ENCODE measurements at regions of chr2 and their contacts with region 1.

Region 1: DNA sequence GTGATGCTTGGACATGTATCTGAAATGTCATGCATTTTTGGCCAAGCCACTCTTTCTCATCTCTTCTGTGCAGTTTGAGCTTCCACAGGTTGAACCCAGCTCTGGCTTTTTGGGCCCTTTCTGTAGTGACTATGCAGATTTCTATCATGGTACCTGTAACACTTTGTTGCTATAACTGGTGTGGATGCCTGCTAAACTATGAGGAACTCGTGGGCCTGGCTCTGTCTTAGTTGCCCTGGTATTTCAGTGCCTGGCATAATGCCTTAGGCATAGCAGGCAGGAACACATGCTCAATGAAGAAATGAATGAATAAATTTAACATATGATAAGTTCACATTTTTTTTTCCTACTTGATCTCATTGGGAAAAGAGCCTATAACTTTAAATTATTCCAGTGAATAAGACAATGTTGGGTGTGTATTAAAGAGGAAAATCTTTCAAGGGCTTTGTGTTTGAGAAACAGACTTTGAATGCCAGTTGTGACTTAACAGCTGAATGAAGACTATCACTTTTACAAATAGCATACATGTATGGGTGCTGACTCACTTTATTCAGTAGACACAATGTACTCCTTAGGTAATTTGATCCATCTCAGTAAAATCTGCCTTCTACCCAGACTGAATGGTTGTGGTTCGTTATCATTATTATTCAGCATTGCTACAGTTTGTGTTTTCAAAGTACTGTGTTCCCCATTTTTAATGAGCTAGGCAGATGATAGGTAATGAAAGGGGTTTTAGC is 86.4 kb upstream of the MAP4K3 start:
- DNase-seq: no peak
- ATAC-seq: no peak
- H3K4me3 Mint-ChIP-seq: no peak overlapping the region
- H3K27ac Mint-ChIP-seq: no peak overlapping the region
- H3K4me1 Mint-ChIP-seq: peaks cover 40% of the 10 kb centered on the region
- H3K27me3 Mint-ChIP-seq: no peaks in the 10 kb centered on the region
- CTCF ChIP-seq: no peak

Region 2: DNA sequence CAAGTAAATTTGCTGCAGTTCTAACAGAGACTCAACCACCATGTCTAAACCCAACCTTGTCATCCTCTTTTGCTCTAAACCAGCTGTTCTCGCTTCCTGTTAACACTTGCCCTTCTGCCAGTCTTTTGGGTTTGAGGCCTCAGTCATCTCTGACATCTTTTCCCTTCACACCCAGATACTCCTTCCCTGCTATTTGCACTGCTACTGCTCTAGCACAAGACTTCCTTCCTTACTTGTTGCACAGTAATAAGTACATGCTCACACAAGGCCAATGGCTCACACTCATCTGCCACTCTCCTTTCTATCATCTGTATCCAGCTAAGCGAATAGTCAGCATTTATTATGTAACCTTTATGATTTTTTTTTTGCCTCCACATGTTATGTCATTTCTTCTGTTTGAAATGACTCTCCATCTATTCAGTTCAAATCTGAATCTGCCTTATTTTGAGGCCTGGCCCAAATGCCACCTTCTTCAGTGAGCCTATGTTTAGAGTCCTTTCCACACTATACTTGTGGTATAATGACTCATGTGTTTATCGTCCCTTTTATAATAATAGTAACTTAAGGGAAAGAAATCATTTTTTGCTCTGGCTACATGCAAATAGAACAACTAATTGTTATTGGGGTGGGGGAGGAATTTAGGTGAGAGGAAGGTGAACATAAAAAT is 257.2 kb before region 1 on chr2:
- CTCF ChIA-PET with region 1: no interaction called
- POLR2A ChIA-PET with region 1: no interaction called
- intact Hi-C with region 1: loop called (anchors 10 kb)
- DNase-seq: no peak
- ATAC-seq: peak; percentile 69
- H3K4me3 Mint-ChIP-seq: peak overlapping the region; percentile 2
- H3K27ac Mint-ChIP-seq: peak overlapping the region; percentile 85
- H3K4me1 Mint-ChIP-seq: peaks cover 29% of the 10 kb centered on the region
- H3K27me3 Mint-ChIP-seq: no peaks in the 10 kb centered on the region
- CTCF ChIP-seq: no peak

Region 3: GRCh38 chr2:39379643-39380524 is 143.6 kb before region 1 on chr2:
- CTCF ChIA-PET with region 1: interaction called, 3 read pairs
- POLR2A ChIA-PET with region 1: no interaction called
- intact Hi-C with region 1: loop called (anchors 2 kb)
- DNase-seq: no peak
- ATAC-seq: peak; percentile 35
- H3K4me3 Mint-ChIP-seq: no peak overlapping the region
- H3K27ac Mint-ChIP-seq: no peak overlapping the region
- H3K4me1 Mint-ChIP-seq: peaks cover 30% of the 10 kb centered on the region
- H3K27me3 Mint-ChIP-seq: no peaks in the 10 kb centered on the region
- CTCF ChIP-seq: no peak

Region 4: GRCh38 chr2:39476524-39476923 is 47.0 kb before region 1 on chr2:
- CTCF ChIA-PET with region 1: no interaction called
- POLR2A ChIA-PET with region 1: no interaction called
- intact Hi-C with region 1: loop called (anchors 5 kb)
- DNase-seq: no peak
- ATAC-seq: peak; percentile 94
- H3K4me3 Mint-ChIP-seq: peak overlapping the region; percentile 62
- H3K27ac Mint-ChIP-seq: peak overlapping the region; percentile 75
- H3K4me1 Mint-ChIP-seq: peaks cover 28% of the 10 kb centered on the region
- H3K27me3 Mint-ChIP-seq: no peaks in the 10 kb centered on the region
- CTCF ChIP-seq: no peak

Region 5: DNA sequence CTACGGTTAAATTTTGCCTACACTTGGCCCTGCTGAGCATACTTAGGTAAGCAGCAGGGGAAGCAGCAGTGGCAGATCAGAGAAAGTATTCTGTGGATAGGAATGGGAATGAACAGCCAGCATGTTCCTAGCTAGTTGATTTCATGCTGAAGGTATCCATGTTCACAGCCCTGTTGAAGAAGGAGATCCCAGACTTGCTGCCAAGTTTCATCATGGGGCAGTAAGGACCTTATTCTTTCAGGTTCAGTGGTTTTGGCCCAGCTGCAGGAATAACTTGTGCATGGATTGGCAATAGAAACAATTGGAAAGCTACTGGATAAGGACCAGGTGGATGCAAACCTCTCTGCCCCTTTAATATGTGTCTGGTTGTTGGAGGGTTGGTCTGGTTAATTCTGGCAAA is 44.0 kb after region 1 on chr2:
- CTCF ChIA-PET with region 1: no interaction called
- POLR2A ChIA-PET with region 1: no interaction called
- intact Hi-C with region 1: no loop called
- DNase-seq: no peak
- ATAC-seq: no peak
- H3K4me3 Mint-ChIP-seq: no peak overlapping the region
- H3K27ac Mint-ChIP-seq: no peak overlapping the region
- H3K4me1 Mint-ChIP-seq: no peaks in the 10 kb centered on the region
- H3K27me3 Mint-ChIP-seq: peaks cover 1% of the 10 kb centered on the region
- CTCF ChIP-seq: no peak

Region 6: GRCh38 chr2:39787950-39788349 is 264.5 kb after region 1 on chr2:
- CTCF ChIA-PET with region 1: no interaction called
- POLR2A ChIA-PET with region 1: no interaction called
- intact Hi-C with region 1: no loop called
- DNase-seq: no peak
- ATAC-seq: no peak
- H3K4me3 Mint-ChIP-seq: no peak overlapping the region
- H3K27ac Mint-ChIP-seq: no peak overlapping the region
- H3K4me1 Mint-ChIP-seq: no peaks in the 10 kb centered on the region
- H3K27me3 Mint-ChIP-seq: peaks cover 2% of the 10 kb centered on the region
- CTCF ChIP-seq: no peak

Measured in activated B cell treated with CpG ODN at 0.5 μM for 24 hours (primary cell).